ENCODE measurements at regions of chr10 and their contacts with region 1.

Region 1: DNA sequence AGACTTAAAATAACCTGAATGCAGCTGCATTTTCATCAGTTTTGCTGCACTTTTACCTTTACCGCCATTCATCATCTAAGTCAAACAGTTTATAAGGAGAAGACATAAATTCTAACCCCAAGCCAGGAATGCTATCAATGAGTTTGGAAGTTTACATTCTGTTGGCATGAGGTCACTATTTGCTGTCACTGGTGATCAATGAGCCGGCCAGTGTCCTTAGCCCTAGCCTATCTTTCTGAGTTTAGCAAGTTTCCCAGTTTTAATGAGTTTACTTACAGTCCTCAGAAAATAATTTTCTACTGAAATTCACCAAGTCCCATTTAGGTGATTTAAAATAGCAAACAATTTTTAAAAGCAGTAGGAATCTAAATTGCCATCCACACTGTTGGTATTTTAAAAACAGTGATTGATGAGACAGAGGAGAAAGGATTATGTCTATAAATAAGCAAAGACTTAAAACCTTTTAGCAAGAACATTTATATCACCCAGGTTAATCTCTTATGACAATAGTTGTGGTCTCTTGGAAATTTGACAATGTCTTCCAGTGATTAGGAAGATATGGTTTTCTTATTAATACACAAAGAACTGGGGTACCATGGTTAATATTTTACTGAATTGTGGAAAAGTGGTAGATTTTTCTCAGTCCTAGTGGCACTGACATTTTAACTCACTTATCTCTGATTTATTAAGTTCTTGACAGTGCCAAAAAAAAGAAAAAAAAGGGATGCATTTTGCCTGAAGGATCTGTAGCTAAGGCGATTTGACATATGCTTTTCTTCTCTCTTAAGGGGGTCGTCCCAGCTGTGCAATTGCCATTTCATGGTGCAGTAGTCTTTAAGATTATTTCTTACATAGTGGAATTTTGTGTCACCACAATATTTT is 443.4 kb upstream of the ANKRD30A start:
- DNase-seq: no peak
- H3K27ac ChIP-seq: no peak overlapping the region
- CTCF ChIP-seq: no peak

Region 2: DNA sequence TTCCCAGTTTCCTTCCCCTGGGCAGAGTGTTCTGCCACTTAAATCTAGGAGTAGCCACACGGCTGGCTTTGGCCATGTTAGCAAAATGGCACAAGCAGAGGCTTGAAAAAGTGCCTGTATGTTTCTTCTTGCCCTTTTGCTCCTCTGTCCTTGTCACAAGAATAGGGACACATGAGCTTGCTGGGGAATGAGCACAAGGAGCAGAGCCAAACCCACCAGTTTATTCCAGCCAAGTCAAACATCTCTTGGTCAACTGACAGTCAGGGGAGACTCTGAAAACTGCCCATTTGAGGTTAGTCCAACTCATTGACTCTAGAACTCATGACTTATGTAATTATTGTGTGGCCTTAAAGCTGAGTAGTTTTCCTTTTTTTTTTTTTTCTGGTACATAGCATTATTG is 300.2 kb before region 1 on chr10:
- CTCF ChIA-PET with region 1: interaction called, 13 read pairs
- POLR2A ChIA-PET with region 1: no interaction called
- DNase-seq: no peak
- H3K27ac ChIP-seq: no peak overlapping the region
- CTCF ChIP-seq: no peak

Measured in RWPE1 (cell line).